H1 (cell line): ENCODE measurements at regions of chr1 and their contacts with region 1.

Region 1: GRCh38 chr1:234309598-234310459 is 63.4 kb upstream of the COA6 start:
- DNase-seq: peak; percentile 47 to 84
- H3K4me3 ChIP-seq: no peak overlapping the region
- H3K27ac ChIP-seq: no peak overlapping the region
- H3K4me1 ChIP-seq: peaks cover 0 to 5% (median 2%) of the 10 kb centered on the region in 4 experiments; a peak in 4 of 7 replicates
- H3K27me3 ChIP-seq: no peaks in the 10 kb centered on the region
- CTCF ChIP-seq: peak; percentile 87 to 92 (median 92)
- EP300 ChIP-seq: no peak
- POLR2A ChIP-seq: no peak
- RAD21 ChIP-seq: peak; percentile 79 to 85

Region 2: DNA sequence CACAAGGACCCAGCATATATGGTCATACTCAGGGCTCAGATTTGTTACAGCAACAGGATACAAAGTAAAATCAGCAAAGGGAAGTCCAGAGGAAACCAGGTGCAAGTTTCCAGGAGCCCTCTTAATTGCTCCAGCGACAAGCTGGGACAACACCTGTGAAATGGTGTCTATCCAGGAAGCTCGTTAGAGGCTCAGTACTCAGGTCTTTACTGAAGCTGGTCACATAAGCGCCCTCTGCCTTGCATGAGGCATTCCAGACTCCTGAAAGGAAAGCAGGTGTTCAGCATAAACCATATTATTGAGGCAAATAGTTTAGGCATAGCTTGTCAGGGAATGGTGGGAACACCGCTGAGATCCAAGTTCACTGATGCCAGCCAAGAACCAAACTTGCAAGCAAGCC is 174.3 kb before region 1 on chr1:
- CTCF ChIA-PET with region 1: interaction called, 11 read pairs
- POLR2A ChIA-PET with region 1: no interaction called
- DNase-seq: no peak
- H3K4me3 ChIP-seq: no peak overlapping the region
- H3K27ac ChIP-seq: no peak overlapping the region
- H3K4me1 ChIP-seq: no peaks in the 10 kb centered on the region
- H3K27me3 ChIP-seq: no peaks in the 10 kb centered on the region
- CTCF ChIP-seq: no peak
- EP300 ChIP-seq: no peak
- POLR2A ChIP-seq: no peak
- RAD21 ChIP-seq: no peak

Region 3: DNA sequence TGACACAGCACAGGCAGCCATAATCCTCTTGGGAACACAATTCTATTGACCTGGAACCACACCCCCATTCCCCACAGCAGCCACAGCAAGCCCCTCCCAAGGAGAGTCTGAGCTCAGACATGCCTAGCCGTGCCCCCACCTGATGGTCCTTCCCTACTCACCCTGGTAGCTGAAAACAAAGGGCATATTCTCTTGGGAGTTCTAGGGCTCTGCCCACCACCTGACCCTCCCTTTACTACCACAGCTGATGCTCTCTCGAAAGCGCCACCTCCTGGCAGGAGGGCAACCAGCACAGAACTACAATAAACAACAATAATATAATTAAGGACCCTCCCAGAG is 121.4 kb before region 1 on chr1:
- CTCF ChIA-PET with region 1: interaction called, 11 read pairs
- POLR2A ChIA-PET with region 1: no interaction called
- DNase-seq: peak; percentile 64 to 85
- H3K4me3 ChIP-seq: no peak overlapping the region
- H3K27ac ChIP-seq: peak overlapping the region; percentile 65; the same call in 1 of the 2 replicates
- H3K4me1 ChIP-seq: peaks cover 0 to 5% (median 2%) of the 10 kb centered on the region in 4 experiments; a peak in 4 of 7 replicates
- H3K27me3 ChIP-seq: no peaks in the 10 kb centered on the region
- CTCF ChIP-seq: peak; percentile 69 to 73 (median 71)
- EP300 ChIP-seq: no peak; a peak in 1 of 3 replicates
- POLR2A ChIP-seq: no peak
- RAD21 ChIP-seq: peak; percentile 53 to 58

Region 4: DNA sequence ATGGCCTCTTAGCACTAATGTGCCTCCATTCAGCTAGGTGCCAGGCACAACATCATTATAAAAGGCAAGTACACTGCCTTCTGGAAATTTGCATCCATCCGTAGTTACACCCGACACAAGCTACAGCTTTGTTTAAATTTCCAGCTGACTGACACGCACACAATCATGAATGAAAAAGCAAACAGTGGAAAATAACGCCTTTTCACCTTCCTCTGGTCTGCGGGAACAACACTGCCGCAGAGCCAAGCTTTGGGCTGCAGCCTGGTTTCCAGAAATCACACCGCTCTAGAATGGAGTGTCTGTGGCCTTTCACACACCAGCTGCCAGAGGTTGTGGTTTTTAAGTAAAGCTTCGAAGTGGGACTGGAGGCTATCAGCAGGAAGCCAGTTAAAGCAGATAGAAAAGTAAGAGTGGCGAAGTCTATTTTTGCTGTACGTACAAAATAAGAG is 79.4 kb before region 1 on chr1:
- CTCF ChIA-PET with region 1: interaction called, 54 read pairs
- POLR2A ChIA-PET with region 1: no interaction called
- DNase-seq: no peak
- H3K4me3 ChIP-seq: no peak overlapping the region
- H3K27ac ChIP-seq: no peak overlapping the region
- H3K4me1 ChIP-seq: peaks cover 2 to 13% (median 9%) of the 10 kb centered on the region in 4 experiments
- H3K27me3 ChIP-seq: no peaks in the 10 kb centered on the region; a peak in 1 of 7 replicates
- CTCF ChIP-seq: no peak
- EP300 ChIP-seq: no peak
- POLR2A ChIP-seq: no peak
- RAD21 ChIP-seq: no peak

Region 5: GRCh38 chr1:234281826-234282489 is 27.9 kb before region 1 on chr1:
- CTCF ChIA-PET with region 1: interaction called, 17 read pairs
- POLR2A ChIA-PET with region 1: no interaction called
- DNase-seq: no peak
- H3K4me3 ChIP-seq: no peak overlapping the region
- H3K27ac ChIP-seq: no peak overlapping the region
- H3K4me1 ChIP-seq: peaks cover 0 to 5% (median 3%) of the 10 kb centered on the region in 4 experiments; a peak in 4 of 7 replicates
- H3K27me3 ChIP-seq: no peaks in the 10 kb centered on the region
- CTCF ChIP-seq: no peak
- EP300 ChIP-seq: no peak
- POLR2A ChIP-seq: no peak
- RAD21 ChIP-seq: no peak

Region 6: DNA sequence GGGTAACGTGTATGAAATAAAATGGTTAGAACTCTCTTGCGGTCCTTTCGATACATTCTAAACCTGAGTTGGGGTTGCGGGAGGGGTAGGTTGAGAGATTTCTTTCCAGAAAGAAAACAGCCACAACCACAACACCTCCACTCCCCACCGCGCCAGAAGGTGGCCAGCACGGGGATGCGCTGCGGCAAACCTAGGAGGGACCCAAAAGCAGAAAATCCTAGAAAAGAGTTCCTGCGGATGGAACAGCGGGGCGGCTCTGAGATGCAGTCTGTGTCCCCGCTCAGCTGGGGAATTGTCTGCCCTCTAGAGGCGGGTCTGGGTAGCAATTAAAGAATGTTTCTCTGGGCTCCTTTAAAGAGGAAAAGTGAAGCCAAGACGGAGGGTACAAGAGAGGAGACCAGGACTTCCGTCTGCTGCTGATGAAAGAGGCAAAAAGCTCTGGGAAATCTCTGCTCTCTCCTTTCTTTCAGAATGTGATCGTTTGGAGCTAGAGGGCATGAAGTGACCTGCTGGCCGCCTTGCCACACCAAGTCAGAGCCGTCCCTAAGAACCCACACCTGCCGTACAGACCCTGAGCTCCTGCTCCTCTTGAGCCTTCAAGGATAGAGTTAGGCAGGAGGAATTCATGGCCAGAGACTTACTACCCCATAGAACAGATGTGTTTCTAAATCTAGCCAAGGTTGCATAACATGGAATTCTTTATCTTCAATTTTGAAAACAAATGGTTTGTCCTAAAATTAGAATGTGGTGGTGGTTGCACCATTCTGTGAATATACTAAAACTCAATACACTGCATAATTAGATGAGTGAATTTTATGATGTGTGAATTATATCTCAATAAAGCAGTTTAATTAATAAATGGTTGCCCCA is 16.9 kb after region 1 on chr1:
- CTCF ChIA-PET with region 1: interaction called, 146 read pairs
- POLR2A ChIA-PET with region 1: interaction called, 3 read pairs
- DNase-seq: peak; percentile 41 to 88
- H3K4me3 ChIP-seq: peak overlapping the region in 1 of 4 experiments; percentile 50; a peak in 1 of 8 replicates
- H3K27ac ChIP-seq: no peak overlapping the region
- H3K4me1 ChIP-seq: peaks cover 0 to 3% (median under 1%) of the 10 kb centered on the region in 4 experiments; a peak in 1 of 7 replicates
- H3K27me3 ChIP-seq: no peaks in the 10 kb centered on the region
- CTCF ChIP-seq: peak; percentile 73 to 85 (median 77)
- EP300 ChIP-seq: no peak
- POLR2A ChIP-seq: no peak
- RAD21 ChIP-seq: peak; percentile 57 to 67

Region 7: DNA sequence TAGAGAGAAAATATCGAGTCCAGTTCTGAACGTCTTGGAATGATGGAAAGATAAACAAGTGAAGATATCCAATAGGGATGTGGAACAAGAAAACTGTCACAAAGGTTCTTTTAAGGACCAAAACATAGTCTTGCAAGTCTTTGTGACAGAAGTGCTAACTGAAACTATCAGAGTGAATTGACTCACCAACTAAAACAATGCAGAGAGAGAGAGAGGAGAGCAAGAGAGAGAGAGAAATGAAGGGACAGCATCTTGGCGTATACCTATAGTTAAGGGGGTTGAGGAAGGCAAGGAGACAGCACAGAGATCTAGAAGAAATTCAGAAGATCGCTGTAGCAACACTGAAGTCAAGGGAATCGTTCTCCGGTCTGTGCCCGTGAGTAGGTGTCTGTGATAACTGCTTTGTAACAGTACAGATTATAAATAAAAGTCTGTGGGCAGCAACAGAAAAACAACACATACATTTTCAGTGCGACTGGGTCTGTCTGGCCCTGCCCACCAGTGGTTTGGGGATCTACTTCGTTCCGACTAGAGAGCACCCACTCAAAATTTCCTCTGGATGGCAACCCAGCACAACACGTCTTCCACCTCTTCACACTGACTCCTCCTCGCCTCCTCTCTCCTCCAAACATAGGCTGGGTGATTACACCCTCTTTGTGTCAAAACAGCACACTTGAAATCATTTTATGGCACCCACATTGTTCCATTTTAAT is 58.6 kb after region 1 on chr1:
- CTCF ChIA-PET with region 1: no interaction called
- POLR2A ChIA-PET with region 1: no interaction called
- DNase-seq: no peak
- H3K4me3 ChIP-seq: no peak overlapping the region
- H3K27ac ChIP-seq: no peak overlapping the region
- H3K4me1 ChIP-seq: peaks cover 0 to 3% (median 0%) of the 10 kb centered on the region in 4 experiments; a peak in 1 of 7 replicates
- H3K27me3 ChIP-seq: no peaks in the 10 kb centered on the region; a peak in 1 of 7 replicates
- CTCF ChIP-seq: no peak
- EP300 ChIP-seq: no peak
- POLR2A ChIP-seq: no peak
- RAD21 ChIP-seq: peak in 1 of 2 experiments; percentile 12; a peak in 1 of 4 replicates

Region 8: GRCh38 chr1:234409328-234409727 is 99.5 kb after region 1 on chr1:
- CTCF ChIA-PET with region 1: no interaction called
- POLR2A ChIA-PET with region 1: no interaction called
- DNase-seq: no peak
- H3K4me3 ChIP-seq: no peak overlapping the region
- H3K27ac ChIP-seq: no peak overlapping the region
- H3K4me1 ChIP-seq: no peaks in the 10 kb centered on the region
- H3K27me3 ChIP-seq: no peaks in the 10 kb centered on the region
- CTCF ChIP-seq: no peak
- EP300 ChIP-seq: no peak
- POLR2A ChIP-seq: no peak
- RAD21 ChIP-seq: peak in 1 of 2 experiments; percentile 21; a peak in 1 of 4 replicates